ENCODE measurements at regions of chr5 and their contacts with region 1.

Region 1: DNA sequence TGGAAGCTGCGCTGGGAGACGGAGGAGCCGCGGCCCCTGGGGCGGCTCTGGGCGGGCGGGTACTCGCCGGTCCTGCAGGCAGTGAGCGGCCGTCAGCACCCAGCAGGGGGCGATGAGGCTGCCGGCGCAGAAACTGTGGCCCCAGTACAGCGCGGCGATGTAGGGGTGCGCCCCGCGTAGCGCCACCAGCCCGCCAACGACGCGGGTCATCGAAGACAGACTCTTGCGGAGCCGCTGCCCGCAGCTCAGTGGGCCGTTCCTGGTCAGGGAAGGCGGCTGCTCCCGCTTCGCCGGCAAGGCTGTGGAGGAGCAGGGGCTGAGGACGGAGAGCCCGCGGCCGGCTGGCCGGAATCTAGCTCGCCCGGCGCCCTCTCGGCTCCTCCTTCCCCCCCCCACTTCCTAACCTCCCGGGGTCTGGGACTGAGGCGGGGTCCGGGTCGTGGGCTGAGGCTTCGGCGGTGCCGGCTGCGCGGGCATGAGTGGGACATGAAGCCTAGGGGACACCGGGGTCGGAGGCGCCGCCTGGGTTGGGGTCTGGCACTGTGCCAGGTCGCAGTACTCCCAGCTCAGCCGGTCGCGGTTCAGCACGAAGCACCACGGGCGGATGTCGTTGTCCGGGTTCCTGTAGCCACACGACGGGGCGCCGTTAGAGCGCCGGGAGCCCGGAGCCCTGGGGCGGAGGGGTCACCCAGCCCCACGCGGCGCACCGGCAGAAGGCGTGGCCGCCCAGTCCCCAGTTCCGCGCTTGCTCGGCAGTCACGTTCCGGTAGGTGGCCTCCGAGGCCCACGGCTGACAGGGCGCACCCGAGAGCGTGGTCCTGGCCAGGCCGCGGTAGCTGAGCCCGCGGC is 3.6 kb upstream of the PFN3 start:
- DNase-seq: peak; percentile 90 to 92 (median 91)
- H3K4me3 ChIP-seq: peak overlapping the region; percentile 21 to 74 (median 39)
- H3K4me3 Mint-ChIP-seq: peak overlapping the region; percentile 72 to 87
- H3K27ac ChIP-seq: no peak overlapping the region
- H3K27ac Mint-ChIP-seq: peak overlapping the region in 5 of 7 donors; percentile 33 to 80 (median 53)
- H3K4me1 ChIP-seq: peaks cover 45 to 46% of the 10 kb centered on the region in 2 donors
- H3K4me1 Mint-ChIP-seq: peaks cover 40% of the 10 kb centered on the region
- H3K27me3 ChIP-seq: peaks cover 26 to 43% of the 10 kb centered on the region in 2 donors
- H3K27me3 Mint-ChIP-seq: peaks cover 38 to 57% (median 51%) of the 10 kb centered on the region in 3 donors
- CTCF ChIP-seq: peak; percentile 76

Region 2: DNA sequence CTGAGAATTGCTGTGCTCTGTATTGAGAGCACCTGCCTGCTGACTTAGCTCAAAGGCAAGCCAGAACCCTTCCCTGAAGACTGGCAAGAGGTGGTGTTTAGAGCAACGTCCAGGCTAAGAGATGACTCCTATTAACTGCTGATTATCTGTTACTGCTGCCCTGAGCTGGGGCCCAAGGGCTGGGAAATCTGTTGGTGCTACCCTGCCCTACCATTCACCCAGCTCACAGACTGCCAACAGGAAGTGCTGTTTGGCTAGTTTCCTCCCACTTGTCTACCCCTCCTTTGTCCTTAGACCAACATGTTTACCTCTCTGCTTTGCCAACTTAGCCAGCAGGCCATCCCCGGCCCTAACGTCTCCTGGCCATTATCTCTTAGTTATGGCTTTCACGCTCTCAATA is 107.4 kb before region 1 on chr5:
- intact Hi-C with region 1: no loop called
- DNase-seq: peak in 2 of 3 donors; percentile 28 to 39
- H3K4me3 ChIP-seq: peak overlapping the region in 1 of 3 experiments; percentile 34
- H3K4me3 Mint-ChIP-seq: peak overlapping the region; percentile 51 to 80
- H3K27ac ChIP-seq: peak overlapping the region; percentile 22 to 65
- H3K27ac Mint-ChIP-seq: peak overlapping the region; percentile 57 to 87 (median 79)
- H3K4me1 ChIP-seq: peaks cover 67 to 68% of the 10 kb centered on the region in 2 donors
- H3K4me1 Mint-ChIP-seq: peaks cover 71% of the 10 kb centered on the region
- H3K27me3 ChIP-seq: no peaks in the 10 kb centered on the region
- H3K27me3 Mint-ChIP-seq: peaks cover 0 to 5% (median 0%) of the 10 kb centered on the region in 3 donors
- CTCF ChIP-seq: no peak

Region 3: DNA sequence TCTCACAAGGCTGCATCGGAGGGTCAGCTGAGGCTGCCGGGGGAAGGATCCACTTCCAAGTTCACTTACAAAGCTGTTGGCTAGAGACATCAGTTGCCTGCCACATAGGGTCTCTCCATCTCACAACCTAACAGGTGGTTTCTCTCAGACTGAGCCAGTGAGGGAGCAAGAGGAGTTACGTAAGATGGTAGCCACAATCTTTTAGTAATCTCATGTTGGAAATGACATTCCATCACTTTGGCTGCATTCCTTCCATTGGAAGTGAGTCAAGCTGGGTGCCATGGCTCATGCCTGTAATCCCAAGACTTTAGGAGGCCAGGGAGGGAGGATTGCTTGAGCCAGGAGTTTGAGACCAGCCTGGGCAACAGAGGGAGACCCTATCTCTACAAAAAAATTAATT is 15.0 kb after region 1 on chr5:
- intact Hi-C with region 1: loop called in 1 of 2 experiments (anchors 2 kb)
- DNase-seq: peak in 1 of 3 donors; percentile 37
- H3K4me3 ChIP-seq: no peak overlapping the region
- H3K4me3 Mint-ChIP-seq: no peak overlapping the region
- H3K27ac ChIP-seq: peak overlapping the region; percentile 68 to 72
- H3K27ac Mint-ChIP-seq: peak overlapping the region; percentile 63 to 95 (median 90)
- H3K4me1 ChIP-seq: peaks cover 42 to 54% of the 10 kb centered on the region in 2 donors
- H3K4me1 Mint-ChIP-seq: peaks cover 55% of the 10 kb centered on the region
- H3K27me3 ChIP-seq: no peaks in the 10 kb centered on the region
- H3K27me3 Mint-ChIP-seq: no peaks in the 10 kb centered on the region
- CTCF ChIP-seq: no peak

Region 4: GRCh38 chr5:177431317-177432142 is 27.5 kb after region 1 on chr5:
- intact Hi-C with region 1: loop called in 1 of 2 experiments (anchors 2 kb)
- DNase-seq: peak; percentile 61 to 70 (median 67)
- H3K4me3 ChIP-seq: peak overlapping the region in 1 of 3 experiments; percentile 59
- H3K4me3 Mint-ChIP-seq: peak overlapping the region; percentile 57 to 70
- H3K27ac ChIP-seq: peak overlapping the region; percentile 98 to 100
- H3K27ac Mint-ChIP-seq: peak overlapping the region; percentile 78 to 100 (median 99)
- H3K4me1 ChIP-seq: peaks cover 60 to 68% of the 10 kb centered on the region in 2 donors
- H3K4me1 Mint-ChIP-seq: peaks cover 50% of the 10 kb centered on the region
- H3K27me3 ChIP-seq: no peaks in the 10 kb centered on the region
- H3K27me3 Mint-ChIP-seq: no peaks in the 10 kb centered on the region
- CTCF ChIP-seq: no peak

Region 5: DNA sequence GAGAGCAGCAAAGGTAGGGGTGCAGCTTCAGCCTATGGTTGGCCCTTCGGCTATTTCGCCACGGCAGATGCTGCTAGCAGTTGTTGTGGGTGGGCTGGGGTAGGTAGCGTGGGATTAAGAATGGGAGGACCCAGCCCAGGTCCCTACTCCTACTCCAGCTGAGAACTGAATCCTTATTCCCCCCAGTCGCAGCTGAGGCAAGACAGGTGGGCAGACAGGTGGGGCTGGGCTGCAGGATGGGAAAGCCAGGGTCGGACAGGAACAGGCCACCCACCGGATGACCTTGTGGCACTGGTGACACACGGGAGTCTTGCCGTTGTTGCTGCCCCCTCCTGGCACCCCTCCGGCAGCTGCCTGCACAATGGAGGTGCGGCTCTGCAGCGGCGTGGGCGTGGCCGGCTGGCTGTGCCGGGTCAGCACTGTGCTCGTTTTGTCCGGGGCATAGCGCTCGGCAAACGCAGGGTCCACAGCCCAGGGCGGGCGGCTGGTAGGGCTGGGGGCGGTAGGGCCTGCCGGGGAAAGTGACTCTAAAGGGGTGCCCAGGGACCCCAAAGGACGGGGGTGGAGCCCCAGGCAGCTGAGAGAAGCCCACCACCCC is 85.2 kb after region 1 on chr5:
- intact Hi-C with region 1: no loop called
- DNase-seq: no peak
- H3K4me3 ChIP-seq: no peak overlapping the region
- H3K4me3 Mint-ChIP-seq: no peak overlapping the region
- H3K27ac ChIP-seq: no peak overlapping the region
- H3K27ac Mint-ChIP-seq: no peak overlapping the region
- H3K4me1 ChIP-seq: peaks cover 29 to 36% of the 10 kb centered on the region in 2 donors
- H3K4me1 Mint-ChIP-seq: peaks cover 32% of the 10 kb centered on the region
- H3K27me3 ChIP-seq: peaks cover 0 to 3% of the 10 kb centered on the region in 2 donors
- H3K27me3 Mint-ChIP-seq: peaks cover 9 to 14% (median 13%) of the 10 kb centered on the region in 3 donors
- CTCF ChIP-seq: no peak